Heart right ventricle (tissue), 16 donors: ENCODE measurements at regions of chr15 and their contacts with region 1.

Region 1: GRCh38 chr15:99296386-99296785 is 45.1 kb downstream of the LRRC28 start:
- DNase-seq: no peak
- ATAC-seq: no peak
- H3K4me3 ChIP-seq: no peak overlapping the region
- H3K27ac ChIP-seq: no peak overlapping the region
- H3K4me1 ChIP-seq: no peaks in the 10 kb centered on the region
- H3K27me3 ChIP-seq: no peaks in the 10 kb centered on the region
- CTCF ChIP-seq: no peak

Region 2: GRCh38 chr15:99361541-99362185 is 65.3 kb after region 1 on chr15:
- intact Hi-C with region 1: loop called in 3 of 10 experiments (anchors 10 kb)
- DNase-seq: no peak
- ATAC-seq: no peak
- H3K4me3 ChIP-seq: no peak overlapping the region
- H3K27ac ChIP-seq: no peak overlapping the region
- H3K4me1 ChIP-seq: no peaks in the 10 kb centered on the region
- H3K27me3 ChIP-seq: no peaks in the 10 kb centered on the region
- CTCF ChIP-seq: peak; percentile 19 to 62 (median 48)

Region 3: DNA sequence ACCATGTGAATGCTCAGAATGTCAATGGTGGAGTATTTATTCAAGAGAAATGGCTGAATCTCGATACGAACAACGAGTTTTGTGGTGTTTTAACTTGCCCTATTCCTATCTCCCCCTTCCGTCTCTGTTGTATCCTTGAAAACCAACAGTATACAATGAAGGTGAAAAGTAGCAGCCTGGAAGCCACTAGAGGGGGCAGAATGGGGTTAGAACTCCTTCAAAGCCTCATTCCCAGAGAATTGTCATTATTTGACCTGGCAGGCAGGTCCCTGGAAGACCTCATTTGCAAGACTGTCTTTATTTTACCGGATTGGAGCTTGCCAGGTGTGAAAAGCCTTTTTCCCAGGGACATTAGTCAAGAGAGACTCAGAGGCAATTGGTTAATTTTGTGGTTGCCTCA is 94.3 kb after region 1 on chr15:
- intact Hi-C with region 1: loop called in 1 of 10 experiments (anchors 10 kb)
- DNase-seq: no peak
- ATAC-seq: no peak
- H3K4me3 ChIP-seq: no peak overlapping the region
- H3K27ac ChIP-seq: no peak overlapping the region
- H3K4me1 ChIP-seq: peaks cover 0 to 11% (median 8%) of the 10 kb centered on the region in 9 donors
- H3K27me3 ChIP-seq: peaks cover 0 to under 1% (median 0%) of the 10 kb centered on the region in 7 donors
- CTCF ChIP-seq: peak in 1 of 9 donors; percentile 25